HCT116 (cell line): ENCODE measurements at regions of chr4 and their contacts with region 1.

Region 1: GRCh38 chr4:40149960-40150385 is 46.9 kb upstream of the RHOH start:
- DNase-seq: peak; percentile 71
- ATAC-seq: peak; percentile 80
- H3K4me3 ChIP-seq: no peak overlapping the region
- H3K27ac ChIP-seq: no peak overlapping the region
- H3K4me1 ChIP-seq: no peaks in the 10 kb centered on the region
- H3K27me3 ChIP-seq: no peaks in the 10 kb centered on the region
- CTCF ChIP-seq: peak; percentile 71 to 83 (median 79)
- POLR2A ChIP-seq: no peak
- RAD21 ChIP-seq: peak; percentile 86

Region 2: GRCh38 chr4:40134203-40134917 is 15.6 kb before region 1 on chr4:
- CTCF ChIA-PET with region 1: no interaction called
- POLR2A ChIA-PET with region 1: no interaction called
- RAD21 ChIA-PET with region 1: no interaction called
- intact Hi-C with region 1: no loop called
- DNase-seq: no peak
- ATAC-seq: peak; percentile 63
- H3K4me3 ChIP-seq: no peak overlapping the region
- H3K27ac ChIP-seq: no peak overlapping the region
- H3K4me1 ChIP-seq: peaks cover 0 to 6% of the 10 kb centered on the region in 2 experiments; a peak in 2 of 4 replicates
- H3K27me3 ChIP-seq: no peaks in the 10 kb centered on the region
- CTCF ChIP-seq: no peak
- POLR2A ChIP-seq: no peak
- RAD21 ChIP-seq: no peak

Region 3: DNA sequence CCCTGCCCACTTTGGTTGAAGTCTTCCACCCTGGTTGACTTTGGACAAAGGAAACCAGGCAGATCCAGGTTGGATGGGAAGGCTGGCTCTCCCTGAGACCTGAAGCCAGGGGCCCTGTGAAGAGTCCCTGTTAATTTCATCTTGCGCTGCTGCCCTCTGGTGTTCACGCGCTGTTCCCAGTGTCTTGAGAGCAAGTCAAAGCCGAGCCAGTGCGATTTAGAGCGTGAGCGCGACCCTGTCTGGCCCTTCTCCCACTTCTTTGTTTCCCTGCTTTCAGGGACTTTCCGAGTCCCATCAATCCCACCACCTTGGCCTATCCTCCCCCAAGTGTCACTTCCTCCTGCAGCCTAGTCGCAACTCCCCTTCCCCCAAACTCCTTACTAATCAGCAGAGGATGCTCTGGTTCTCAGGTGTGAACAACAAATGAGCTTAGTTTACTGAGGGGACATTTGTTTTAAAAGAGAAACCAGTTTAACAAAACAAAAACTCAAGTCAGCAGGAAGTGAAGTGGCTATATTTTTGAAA is 159.3 kb after region 1 on chr4:
- CTCF ChIA-PET with region 1: interaction called, 6 read pairs
- POLR2A ChIA-PET with region 1: no interaction called
- RAD21 ChIA-PET with region 1: no interaction called
- intact Hi-C with region 1: loop called (anchors 1 kb)
- DNase-seq: peak; percentile 77
- ATAC-seq: peak; percentile 99
- H3K4me3 ChIP-seq: peak overlapping the region; percentile 11 to 37; a peak in 2 of 4 replicates
- H3K27ac ChIP-seq: no peak overlapping the region
- H3K4me1 ChIP-seq: peaks cover 0 to 8% of the 10 kb centered on the region in 2 experiments; a peak in 2 of 4 replicates
- H3K27me3 ChIP-seq: no peaks in the 10 kb centered on the region
- CTCF ChIP-seq: peak; percentile 87 to 91 (median 88)
- POLR2A ChIP-seq: no peak
- RAD21 ChIP-seq: peak; percentile 92

Region 4: DNA sequence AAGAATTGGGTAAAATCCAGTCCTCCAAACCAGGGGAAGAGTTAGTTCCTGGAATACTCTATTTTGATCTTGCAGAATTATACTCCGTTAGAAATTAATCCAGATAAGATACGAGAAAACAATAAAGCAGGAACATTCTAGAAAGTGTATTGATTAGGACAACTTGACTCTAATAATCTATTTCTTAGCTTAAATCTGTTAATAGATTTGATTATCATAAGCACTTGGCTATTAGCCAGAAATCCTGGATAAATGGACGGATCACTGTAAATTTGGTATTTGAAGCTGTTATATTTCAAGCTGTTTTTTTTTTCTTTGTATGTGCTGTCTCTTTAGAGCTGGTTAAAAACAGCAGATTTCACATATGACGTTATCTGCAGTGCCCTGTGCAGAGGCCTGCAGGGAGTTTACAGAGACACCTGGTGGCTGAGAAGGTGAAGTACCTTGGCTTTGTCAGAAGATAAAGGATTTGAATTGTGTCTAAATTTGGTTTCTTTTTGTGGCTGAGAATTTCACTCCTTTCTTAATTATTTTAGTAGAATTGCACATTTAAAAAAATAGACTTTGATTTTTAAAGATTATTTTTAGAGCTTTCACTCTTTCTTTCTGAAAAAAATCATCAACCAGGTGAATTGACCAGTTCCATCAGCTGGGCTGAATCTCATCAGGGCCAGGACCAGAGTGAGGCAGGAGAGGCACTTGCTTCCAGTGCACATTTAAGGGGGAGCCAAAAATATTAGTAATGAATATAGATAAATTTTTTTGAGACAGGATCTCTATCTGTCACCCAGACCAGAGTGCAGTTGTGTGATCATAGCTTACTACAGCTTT is 175.4 kb after region 1 on chr4:
- CTCF ChIA-PET with region 1: no interaction called
- POLR2A ChIA-PET with region 1: no interaction called
- RAD21 ChIA-PET with region 1: no interaction called
- intact Hi-C with region 1: loop called (anchors 1 kb)
- DNase-seq: peak; percentile 58
- ATAC-seq: peak; percentile 97
- H3K4me3 ChIP-seq: no peak overlapping the region
- H3K27ac ChIP-seq: no peak overlapping the region
- H3K4me1 ChIP-seq: peaks cover 0 to 3% of the 10 kb centered on the region in 2 experiments; a peak in 1 of 4 replicates
- H3K27me3 ChIP-seq: no peaks in the 10 kb centered on the region
- CTCF ChIP-seq: peak; percentile 79 to 91 (median 90)
- POLR2A ChIP-seq: no peak
- RAD21 ChIP-seq: peak; percentile 84